HCT116 (cell line): ENCODE measurements at regions of chr3 and their contacts with region 1.

Region 1: DNA sequence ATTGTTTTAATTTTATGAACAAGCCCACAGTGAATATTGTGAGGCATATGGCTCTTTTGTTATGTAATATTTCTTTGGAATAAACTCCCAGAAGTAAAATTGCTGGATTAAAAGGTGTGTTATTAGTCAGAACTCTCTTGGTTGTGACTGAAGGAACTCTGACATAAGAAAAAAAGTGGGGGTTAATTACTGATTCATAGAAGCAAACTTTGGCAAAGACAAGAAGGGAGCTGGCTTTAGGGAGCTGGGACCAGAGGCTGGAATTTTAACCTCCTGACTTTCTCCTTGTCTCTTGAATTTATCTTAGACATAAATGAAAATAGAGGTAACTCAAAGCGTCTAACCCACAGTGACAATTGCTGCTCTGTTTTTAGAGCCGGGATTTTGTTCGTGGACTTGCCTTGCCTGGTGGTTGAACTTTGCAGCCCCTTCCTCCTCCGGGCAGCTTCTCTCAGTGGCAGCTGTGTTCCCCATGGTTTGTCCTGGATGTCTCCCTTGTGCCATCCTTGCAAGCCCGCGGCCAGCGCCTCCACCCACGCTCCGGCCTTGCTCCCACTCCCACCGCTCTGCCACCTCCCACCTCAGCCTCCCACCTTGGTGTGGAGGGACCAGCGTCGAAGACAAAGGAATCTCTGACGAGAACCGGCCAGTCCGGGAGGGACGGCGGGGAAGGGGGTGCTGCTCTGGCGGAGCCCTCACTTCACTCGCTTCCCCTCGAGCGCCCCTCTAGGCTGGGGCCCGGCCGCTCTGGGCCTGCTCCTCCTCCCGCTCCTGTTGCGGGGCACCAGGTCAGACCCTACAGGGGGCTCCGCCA is 28.0 kb downstream of the ARHGAP31 start:
- DNase-seq: no peak
- ATAC-seq: peak; percentile 76
- H3K4me3 ChIP-seq: peak overlapping the region; percentile 58 to 73
- H3K27ac ChIP-seq: peak overlapping the region; percentile 81
- H3K4me1 ChIP-seq: peaks cover 15 to 20% of the 10 kb centered on the region in 2 experiments; a peak in 3 of 4 replicates
- H3K27me3 ChIP-seq: no peaks in the 10 kb centered on the region
- CTCF ChIP-seq: peak in 1 of 3 experiments; percentile 8; a peak in 2 of 6 replicates
- POLR2A ChIP-seq: no peak
- RAD21 ChIP-seq: no peak

Region 2: GRCh38 chr3:119293871-119294695 is 28.1 kb before region 1 on chr3 and contains the start of gene ARHGAP31:
- CTCF ChIA-PET with region 1: no interaction called
- POLR2A ChIA-PET with region 1: interaction called, 4 read pairs
- RAD21 ChIA-PET with region 1: no interaction called
- intact Hi-C with region 1: loop called (anchors 1 kb)
- DNase-seq: no peak
- ATAC-seq: peak; percentile 76
- H3K4me3 ChIP-seq: peak within 1 kb of the TSS; percentile 66 to 68
- H3K27ac ChIP-seq: peak within 1 kb of the TSS; percentile 44
- H3K4me1 ChIP-seq: peaks cover 4 to 16% of the 10 kb centered on the region in 2 experiments; a peak in 2 of 4 replicates
- H3K27me3 ChIP-seq: no peaks in the 10 kb centered on the region
- CTCF ChIP-seq: no peak
- POLR2A ChIP-seq: no peak
- RAD21 ChIP-seq: no peak
- total RNA-seq, gene ARHGAP31: 0.93 TPM

Region 3: GRCh38 chr3:119310071-119310470 is 12.2 kb before region 1 on chr3:
- CTCF ChIA-PET with region 1: no interaction called
- POLR2A ChIA-PET with region 1: no interaction called
- RAD21 ChIA-PET with region 1: no interaction called
- intact Hi-C with region 1: no loop called
- DNase-seq: no peak
- ATAC-seq: no peak; the same call in 1 of the 2 replicates
- H3K4me3 ChIP-seq: no peak overlapping the region
- H3K27ac ChIP-seq: no peak overlapping the region
- H3K4me1 ChIP-seq: peaks cover 0 to 18% of the 10 kb centered on the region in 2 experiments; a peak in 2 of 4 replicates
- H3K27me3 ChIP-seq: no peaks in the 10 kb centered on the region
- CTCF ChIP-seq: no peak
- POLR2A ChIP-seq: no peak
- RAD21 ChIP-seq: no peak

Region 4: DNA sequence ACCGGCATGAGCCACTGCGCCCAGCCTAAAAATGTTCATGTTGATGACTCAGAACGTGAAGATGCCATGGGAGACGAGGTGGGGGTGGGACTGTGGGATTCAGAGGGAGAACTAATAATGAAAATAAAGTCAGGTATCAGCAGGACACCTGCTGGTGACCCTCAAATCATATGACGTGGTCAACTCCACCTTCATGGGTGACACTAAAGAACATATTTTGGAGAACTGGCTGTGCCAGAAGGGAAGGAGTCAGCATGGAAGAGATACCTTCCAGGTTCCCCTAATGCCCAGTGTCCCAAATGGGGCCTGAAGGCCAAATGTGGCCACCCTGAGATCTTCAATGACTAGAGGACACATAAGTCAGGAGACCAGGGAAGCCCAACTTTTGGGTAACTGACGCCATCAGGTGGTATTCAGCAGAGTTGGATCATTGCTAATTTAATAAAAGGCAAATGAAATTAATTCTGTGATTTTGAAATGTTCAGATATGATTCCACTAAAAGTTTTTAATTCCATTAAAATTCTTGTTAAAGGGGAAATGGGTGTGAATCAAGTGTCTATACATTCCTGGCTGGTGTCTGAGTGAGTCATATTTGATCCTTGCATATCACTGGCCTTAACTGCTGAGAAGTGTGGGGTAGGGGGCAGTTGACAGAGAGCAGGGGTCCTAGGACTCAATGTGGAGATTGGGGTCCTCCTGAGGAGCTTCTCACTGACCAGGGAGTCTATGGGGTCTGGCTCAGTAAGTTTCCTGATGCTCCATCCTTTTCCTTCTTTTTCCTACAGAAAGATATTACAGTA is 860.7 kb after region 1 on chr3:
- CTCF ChIA-PET with region 1: no interaction called
- POLR2A ChIA-PET with region 1: no interaction called
- RAD21 ChIA-PET with region 1: no interaction called
- intact Hi-C with region 1: no loop called
- DNase-seq: peak; percentile 26
- ATAC-seq: peak; percentile 83
- H3K4me3 ChIP-seq: no peak overlapping the region
- H3K27ac ChIP-seq: no peak overlapping the region
- H3K4me1 ChIP-seq: peaks cover 0 to 5% of the 10 kb centered on the region in 2 experiments; a peak in 1 of 4 replicates
- H3K27me3 ChIP-seq: no peaks in the 10 kb centered on the region
- CTCF ChIP-seq: peak in 2 of 3 experiments; percentile 64 to 91; a peak in 4 of 6 replicates
- POLR2A ChIP-seq: no peak
- RAD21 ChIP-seq: peak; percentile 84